HCT116 (cell line): ENCODE measurements at regions of chr19 and their contacts with region 1.

Region 1: DNA sequence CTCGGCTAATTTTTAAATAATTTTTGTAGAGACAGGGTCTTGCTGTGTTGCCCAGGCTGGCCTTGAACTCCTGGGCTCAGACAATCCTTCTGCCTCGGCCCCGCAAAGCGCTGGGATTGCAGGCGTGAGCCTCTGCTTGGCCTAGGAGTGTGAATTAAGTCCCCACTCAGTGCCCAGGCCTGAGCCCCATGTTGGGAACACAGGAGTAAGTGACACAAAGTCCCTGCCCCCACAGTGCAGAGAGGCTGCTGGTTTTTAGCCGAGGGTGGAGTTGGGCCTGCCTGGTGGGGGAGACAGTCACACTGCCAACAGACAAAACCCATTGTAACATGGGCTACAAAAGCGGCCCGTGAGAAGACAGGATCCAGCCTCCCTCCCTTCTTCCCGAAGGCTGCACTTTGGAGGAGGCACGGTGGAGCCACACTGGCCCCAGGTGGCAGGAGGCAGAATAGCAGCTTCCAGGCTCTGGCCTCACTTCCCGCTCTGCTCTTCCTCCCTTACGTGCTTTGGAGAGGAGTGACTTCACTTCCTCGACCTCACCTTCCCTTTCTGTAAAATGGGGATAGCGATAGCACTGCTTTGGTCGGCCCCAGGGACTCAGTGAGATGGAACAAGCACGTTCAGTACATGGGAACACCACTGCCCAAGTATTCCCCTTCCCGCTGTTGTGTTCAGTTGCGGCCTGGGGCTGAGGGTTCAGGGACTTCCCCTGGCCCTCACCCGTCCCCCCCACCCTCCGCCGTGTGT is 15.2 kb upstream of the EHD2 start:
- DNase-seq: peak; percentile 68
- ATAC-seq: peak; percentile 89
- H3K4me3 ChIP-seq: no peak overlapping the region
- H3K27ac ChIP-seq: peak overlapping the region; percentile 49
- H3K4me1 ChIP-seq: peaks cover 3 to 8% of the 10 kb centered on the region in 2 experiments; a peak in 3 of 4 replicates
- H3K27me3 ChIP-seq: no peaks in the 10 kb centered on the region
- CTCF ChIP-seq: peak; percentile 92 to 99 (median 99)
- POLR2A ChIP-seq: no peak
- RAD21 ChIP-seq: peak; percentile 99

Region 2: DNA sequence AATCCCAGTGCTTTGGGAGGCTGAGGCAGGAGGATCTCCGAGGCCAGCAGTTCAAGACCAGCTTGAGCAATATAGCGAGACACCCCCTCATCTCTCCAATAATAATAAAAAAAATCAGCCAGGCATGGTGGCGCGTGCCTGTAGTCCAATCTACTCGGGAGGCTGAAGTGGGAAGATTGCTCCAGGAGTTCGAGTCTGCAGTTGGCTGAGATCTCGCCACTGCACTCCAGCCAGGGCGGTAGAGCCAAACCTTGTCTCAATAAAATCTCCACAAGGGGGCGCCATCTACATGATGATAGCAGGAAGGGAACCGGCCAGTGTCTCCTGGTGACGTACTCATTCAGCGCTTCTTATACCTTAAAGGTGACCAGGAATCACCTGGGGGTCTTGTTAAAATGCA is 402.0 kb before region 1 on chr19:
- CTCF ChIA-PET with region 1: no interaction called
- POLR2A ChIA-PET with region 1: no interaction called
- RAD21 ChIA-PET with region 1: no interaction called
- intact Hi-C with region 1: loop called (anchors 10 kb)
- DNase-seq: peak; percentile 79
- ATAC-seq: peak; percentile 99
- H3K4me3 ChIP-seq: no peak overlapping the region
- H3K27ac ChIP-seq: no peak overlapping the region
- H3K4me1 ChIP-seq: peaks cover 0 to 1% of the 10 kb centered on the region in 2 experiments; a peak in 2 of 4 replicates
- H3K27me3 ChIP-seq: no peaks in the 10 kb centered on the region
- CTCF ChIP-seq: peak; percentile 69 to 89 (median 80)
- POLR2A ChIP-seq: no peak
- RAD21 ChIP-seq: peak; percentile 94

Region 3: GRCh38 chr19:47514869-47515588 is 183.0 kb before region 1 on chr19 and contains the start of gene NAPA:
- CTCF ChIA-PET with region 1: interaction called, 4 read pairs
- POLR2A ChIA-PET with region 1: no interaction called
- RAD21 ChIA-PET with region 1: no interaction called
- intact Hi-C with region 1: loop called (anchors 1 kb)
- DNase-seq: peak; percentile 99
- ATAC-seq: peak; percentile 95
- H3K4me3 ChIP-seq: peak within 1 kb of the TSS; percentile 88 to 100
- H3K27ac ChIP-seq: peak within 1 kb of the TSS; percentile 64
- H3K4me1 ChIP-seq: peaks cover 8 to 26% of the 10 kb centered on the region in 2 experiments; a peak in 3 of 4 replicates
- H3K27me3 ChIP-seq: no peaks in the 10 kb centered on the region
- CTCF ChIP-seq: no peak
- POLR2A ChIP-seq: no peak
- RAD21 ChIP-seq: no peak; the same call in 1 of the 2 replicates
- total RNA-seq, gene NAPA: 58.8 TPM

Region 4: DNA sequence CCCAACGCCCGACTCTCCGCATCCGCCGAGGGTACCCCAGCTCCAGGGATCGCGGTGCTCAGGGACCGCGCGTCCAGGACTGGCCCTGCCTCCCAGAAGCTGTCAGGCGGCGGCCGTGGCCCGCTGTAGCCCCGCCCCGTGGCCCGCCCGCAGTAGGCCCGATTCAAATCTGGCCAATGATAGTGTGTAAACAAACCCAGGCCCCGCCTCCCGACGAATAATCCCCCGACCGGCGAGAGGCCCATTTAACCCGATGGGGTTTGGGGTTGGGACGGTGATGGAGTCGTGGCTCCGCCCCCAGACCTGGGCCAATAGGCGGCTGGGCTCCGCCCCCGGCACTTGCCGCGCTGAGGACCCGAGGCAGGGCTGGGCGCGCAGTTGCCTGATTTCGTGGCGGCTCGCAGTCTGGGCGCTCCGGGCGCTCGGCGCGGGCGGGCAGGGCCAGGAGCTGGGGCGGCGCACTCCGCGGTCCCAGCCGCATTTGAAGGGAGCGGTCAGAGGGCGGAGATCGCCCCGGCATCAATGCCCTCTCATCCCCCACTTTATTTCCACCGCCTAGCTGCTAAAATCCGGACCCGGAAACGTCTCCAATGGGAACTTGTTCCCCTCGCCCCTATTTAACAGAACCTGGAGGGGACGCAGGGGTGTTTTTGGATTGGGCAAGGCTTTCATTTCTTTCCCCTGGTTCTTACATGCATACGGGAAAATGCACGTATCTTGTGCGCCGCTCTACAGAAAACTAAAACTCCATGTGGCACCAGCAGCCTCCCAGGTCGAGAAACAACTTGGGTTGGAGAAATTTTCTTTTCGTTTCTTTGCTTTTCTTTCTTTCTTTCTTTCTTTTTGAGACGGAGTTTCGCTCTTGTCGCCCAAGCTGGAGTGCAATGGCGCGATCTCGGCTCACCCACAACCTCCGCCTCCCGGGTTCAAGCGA is 97.5 kb before region 1 on chr19:
- CTCF ChIA-PET with region 1: no interaction called
- POLR2A ChIA-PET with region 1: no interaction called
- RAD21 ChIA-PET with region 1: no interaction called
- intact Hi-C with region 1: loop called (anchors 5 kb)
- DNase-seq: peak; percentile 96
- ATAC-seq: peak; percentile 92
- H3K4me3 ChIP-seq: peak overlapping the region; percentile 74 to 86
- H3K27ac ChIP-seq: peak overlapping the region; percentile 75
- H3K4me1 ChIP-seq: peaks cover 22 to 35% of the 10 kb centered on the region in 2 experiments
- H3K27me3 ChIP-seq: no peaks in the 10 kb centered on the region
- CTCF ChIP-seq: no peak
- POLR2A ChIP-seq: peak; percentile 69
- RAD21 ChIP-seq: no peak

Region 5: GRCh38 chr19:47713046-47714021 is 15.3 kb after region 1 on chr19 and contains the start of gene EHD2:
- CTCF ChIA-PET with region 1: interaction called, 14 read pairs
- POLR2A ChIA-PET with region 1: no interaction called
- RAD21 ChIA-PET with region 1: no interaction called
- intact Hi-C with region 1: no loop called
- DNase-seq: no peak
- ATAC-seq: peak; percentile 92
- H3K4me3 ChIP-seq: peak within 1 kb of the TSS; percentile 74 to 97
- H3K27ac ChIP-seq: peak within 1 kb of the TSS; percentile 93
- H3K4me1 ChIP-seq: peaks cover 5 to 17% of the 10 kb centered on the region in 2 experiments; a peak in 3 of 4 replicates
- H3K27me3 ChIP-seq: no peaks in the 10 kb centered on the region
- CTCF ChIP-seq: peak; percentile 83 to 95 (median 90)
- POLR2A ChIP-seq: peak; percentile 37
- RAD21 ChIP-seq: peak; percentile 99
- total RNA-seq, gene EHD2: 60.5 TPM